ENCODE measurements at regions of chr14 and their contacts with region 1.

Region 1: GRCh38 chr14:105086833-105087307 is 21.6 kb upstream of the GPR132 start:
- DNase-seq: peak; percentile 93

Region 2: DNA sequence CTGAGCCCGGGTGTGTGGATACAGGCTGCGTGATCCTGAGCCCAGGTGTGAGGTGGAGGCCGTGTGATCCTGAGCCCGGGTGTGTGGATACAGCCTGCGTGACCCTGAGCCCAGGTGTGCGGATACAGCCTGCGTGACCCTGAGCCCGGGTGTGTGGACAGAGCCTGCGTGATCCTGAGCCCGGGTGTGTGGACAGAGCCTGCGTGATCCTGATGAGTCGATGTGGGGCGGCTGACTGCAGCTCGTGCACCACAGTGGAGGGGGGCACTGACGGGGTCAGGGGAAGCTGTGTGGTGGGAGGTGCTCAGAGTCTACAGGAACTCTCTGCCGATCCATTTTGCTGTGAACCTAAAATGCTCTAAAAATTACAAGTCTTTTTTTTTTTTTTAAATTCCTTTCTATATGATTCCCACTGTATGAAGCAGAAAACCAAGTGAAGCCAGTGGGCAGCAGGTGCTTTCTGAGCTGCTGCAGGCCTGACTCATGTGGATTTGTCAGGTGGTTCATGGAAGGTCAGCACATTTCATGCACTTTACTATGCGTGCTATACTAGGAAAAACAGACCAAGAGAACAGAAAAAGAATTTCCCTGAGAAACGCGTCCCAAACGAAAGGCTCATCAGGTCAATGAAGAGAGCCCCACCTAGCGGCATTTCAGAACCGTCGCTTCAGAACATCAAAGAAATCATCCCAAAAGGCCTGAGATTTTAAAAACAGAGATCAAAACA is 194.7 kb after region 1 on chr14:
- intact Hi-C with region 1: loop called in 1 of 2 experiments (anchors 10 kb)
- DNase-seq: no peak

Region 3: GRCh38 chr14:105351920-105352851 is 265.3 kb after region 1 on chr14:
- intact Hi-C with region 1: loop called in 1 of 2 experiments (anchors 5 kb)
- DNase-seq: peak; percentile 93

Region 4: DNA sequence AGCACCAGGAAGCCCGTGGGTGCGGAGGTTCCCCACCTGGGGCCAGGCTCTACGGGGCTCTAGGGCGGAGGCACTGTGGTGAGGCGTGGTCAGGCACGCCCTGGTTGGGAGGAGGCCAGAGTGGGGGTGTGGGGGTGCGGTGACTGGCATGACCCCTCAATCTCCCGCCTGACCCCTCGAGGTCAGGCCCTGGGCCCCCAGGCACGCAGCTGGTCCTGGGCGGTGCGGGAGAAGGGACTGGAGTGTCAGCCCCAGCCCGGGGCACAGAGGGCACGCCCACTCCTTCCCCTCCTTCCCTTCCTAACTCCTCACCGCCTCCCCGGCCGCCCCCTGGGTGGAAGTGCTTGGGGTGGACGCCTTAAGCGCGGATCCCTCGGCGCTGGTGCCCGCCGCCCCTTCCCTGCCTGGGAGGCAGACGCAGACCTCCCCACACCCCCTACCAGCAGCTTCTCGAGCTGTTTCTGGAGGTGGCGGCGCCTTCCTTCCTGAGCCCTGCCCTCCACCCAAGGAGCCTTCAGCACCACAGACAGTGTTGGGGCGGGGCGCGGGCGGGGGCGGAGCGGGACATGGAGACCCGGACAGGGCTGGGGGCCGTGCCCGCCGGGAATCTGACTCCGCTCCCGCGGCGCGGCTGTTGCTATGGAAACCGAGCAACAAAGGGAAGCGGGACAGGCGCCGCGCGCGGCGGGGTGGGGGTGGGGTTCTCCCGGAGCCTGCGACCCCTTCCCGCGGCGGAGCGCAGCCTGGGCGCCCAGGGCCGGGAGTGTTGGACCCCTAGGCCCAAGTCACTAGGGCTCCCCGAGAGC is 387.0 kb after region 1 on chr14:
- intact Hi-C with region 1: loop called in 1 of 2 experiments (anchors 10 kb)
- DNase-seq: peak; percentile 97